ENCODE measurements at regions of chr13 and their contacts with region 1.

Region 1: GRCh38 chr13:24995226-24995804 is 100.6 kb upstream of the PABPC3 start:
- DNase-seq: peak; percentile 76
- ATAC-seq: peak; percentile 83
- H3K4me3 Mint-ChIP-seq: no peak overlapping the region
- H3K27ac Mint-ChIP-seq: no peak overlapping the region
- H3K4me1 Mint-ChIP-seq: peaks cover 3% of the 10 kb centered on the region
- H3K27me3 Mint-ChIP-seq: peaks cover 16% of the 10 kb centered on the region

Region 2: GRCh38 chr13:24747248-24748060 is 247.9 kb before region 1 on chr13:
- CTCF ChIA-PET with region 1: interaction called, 3 read pairs
- POLR2A ChIA-PET with region 1: no interaction called
- intact Hi-C with region 1: loop called in 1 of 2 experiments (anchors 10 kb)
- DNase-seq: peak; percentile 58
- ATAC-seq: peak; percentile 47
- H3K4me3 Mint-ChIP-seq: peak overlapping the region; percentile 57
- H3K27ac Mint-ChIP-seq: no peak overlapping the region
- H3K4me1 Mint-ChIP-seq: peaks cover 9% of the 10 kb centered on the region
- H3K27me3 Mint-ChIP-seq: peaks cover 49% of the 10 kb centered on the region

Region 3: DNA sequence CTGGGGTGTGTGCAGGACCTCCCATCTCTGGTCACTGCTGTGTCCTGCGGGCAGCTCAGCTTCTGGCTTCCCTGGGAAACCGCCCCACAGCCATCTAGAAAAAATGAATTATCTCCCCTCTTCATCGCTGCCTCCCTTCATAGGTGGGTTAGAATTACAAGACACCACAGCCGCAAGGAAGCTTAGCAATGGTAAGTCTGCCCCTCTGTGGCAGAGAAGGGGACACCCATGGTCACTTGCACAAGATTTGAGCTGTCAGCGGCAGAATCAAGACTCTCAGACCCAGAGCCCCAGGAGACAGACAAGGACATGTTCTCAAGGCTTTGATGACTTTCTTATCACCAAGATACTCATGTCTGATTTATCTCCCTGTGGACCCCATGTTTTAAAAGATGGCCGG is 10.2 kb before region 1 on chr13:
- CTCF ChIA-PET with region 1: interaction called, 11 read pairs
- POLR2A ChIA-PET with region 1: interaction called, 3 read pairs
- intact Hi-C with region 1: no loop called
- DNase-seq: no peak
- ATAC-seq: no peak
- H3K4me3 Mint-ChIP-seq: no peak overlapping the region
- H3K27ac Mint-ChIP-seq: no peak overlapping the region
- H3K4me1 Mint-ChIP-seq: no peaks in the 10 kb centered on the region
- H3K27me3 Mint-ChIP-seq: peaks cover 33% of the 10 kb centered on the region

Region 4: GRCh38 chr13:25032160-25032559 is 36.8 kb after region 1 on chr13:
- CTCF ChIA-PET with region 1: interaction called, 13 read pairs
- POLR2A ChIA-PET with region 1: no interaction called
- intact Hi-C with region 1: loop called (anchors 1 to 2 kb)
- DNase-seq: no peak
- ATAC-seq: no peak
- H3K4me3 Mint-ChIP-seq: no peak overlapping the region
- H3K27ac Mint-ChIP-seq: no peak overlapping the region
- H3K4me1 Mint-ChIP-seq: peaks cover 2% of the 10 kb centered on the region
- H3K27me3 Mint-ChIP-seq: peaks cover 27% of the 10 kb centered on the region

Region 5: DNA sequence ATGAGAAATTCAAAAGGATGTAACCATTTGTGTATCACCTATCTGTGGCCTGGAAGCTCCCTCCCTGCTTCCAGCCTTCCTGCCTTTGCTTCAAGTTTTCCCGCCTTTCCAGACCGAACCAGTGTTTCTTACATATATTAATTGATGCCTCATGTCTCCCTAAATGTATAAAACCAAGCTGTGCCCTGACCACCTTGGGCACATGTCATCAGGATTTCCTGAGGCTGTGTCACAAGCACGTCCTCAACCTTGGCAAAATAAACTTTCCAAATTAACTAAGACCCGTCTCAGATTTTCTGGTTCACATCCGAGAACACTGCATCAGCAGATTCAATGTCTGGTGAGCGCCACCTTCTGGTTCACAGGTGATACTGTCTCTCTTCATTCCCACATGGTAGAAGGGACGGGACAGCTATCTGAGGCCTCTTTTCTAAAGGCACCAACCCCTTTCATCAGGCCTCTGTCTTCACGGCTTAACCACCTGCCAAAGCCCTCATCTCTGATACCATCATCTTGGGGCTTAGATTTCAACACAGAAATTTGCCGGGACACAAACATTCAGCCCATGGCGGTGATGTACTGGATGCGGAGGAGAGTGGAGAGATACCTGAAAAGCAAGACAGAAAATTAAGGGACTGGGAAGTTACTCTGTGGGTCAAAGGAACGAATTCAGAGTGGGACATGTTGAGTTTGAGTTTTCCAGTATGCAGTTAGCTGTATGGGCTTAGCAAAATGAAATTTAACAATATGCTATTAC is 41.9 kb after region 1 on chr13:
- CTCF ChIA-PET with region 1: interaction called, 13 read pairs
- POLR2A ChIA-PET with region 1: no interaction called
- intact Hi-C with region 1: loop called (anchors 1 to 2 kb)
- DNase-seq: peak; percentile 69
- ATAC-seq: peak; percentile 60
- H3K4me3 Mint-ChIP-seq: no peak overlapping the region
- H3K27ac Mint-ChIP-seq: no peak overlapping the region
- H3K4me1 Mint-ChIP-seq: peaks cover 2% of the 10 kb centered on the region
- H3K27me3 Mint-ChIP-seq: peaks cover 33% of the 10 kb centered on the region

Region 6: DNA sequence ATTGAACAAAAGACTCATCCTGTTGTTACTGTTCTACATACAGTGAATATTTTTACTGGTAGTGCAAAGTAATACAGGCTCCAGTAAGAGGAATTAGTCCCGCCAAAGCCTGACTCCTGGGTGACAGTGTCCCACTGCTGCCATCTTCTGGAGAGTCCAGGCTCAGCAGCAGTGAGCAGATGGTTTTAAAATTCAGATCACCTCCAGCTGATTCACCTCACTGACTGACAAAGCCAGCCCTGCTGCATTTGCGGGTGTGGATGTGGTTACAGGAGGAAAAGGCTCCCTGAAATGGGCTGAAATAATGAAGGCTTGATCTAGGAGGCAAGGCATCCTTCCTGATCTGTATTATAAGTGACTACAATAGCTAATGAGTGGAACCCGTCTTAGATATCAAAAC is 118.9 kb after region 1 on chr13:
- CTCF ChIA-PET with region 1: interaction called, 17 read pairs
- POLR2A ChIA-PET with region 1: no interaction called
- intact Hi-C with region 1: loop called in 1 of 2 experiments (anchors 2 kb)
- DNase-seq: peak; percentile 79
- ATAC-seq: peak; percentile 81
- H3K4me3 Mint-ChIP-seq: no peak overlapping the region
- H3K27ac Mint-ChIP-seq: no peak overlapping the region
- H3K4me1 Mint-ChIP-seq: no peaks in the 10 kb centered on the region
- H3K27me3 Mint-ChIP-seq: peaks cover 16% of the 10 kb centered on the region

Region 7: GRCh38 chr13:25375727-25376358 is 380.5 kb after region 1 on chr13:
- CTCF ChIA-PET with region 1: no interaction called
- POLR2A ChIA-PET with region 1: no interaction called
- intact Hi-C with region 1: loop called in 1 of 2 experiments (anchors 10 kb)
- DNase-seq: peak; percentile 48
- ATAC-seq: no peak
- H3K4me3 Mint-ChIP-seq: no peak overlapping the region
- H3K27ac Mint-ChIP-seq: no peak overlapping the region
- H3K4me1 Mint-ChIP-seq: peaks cover 6% of the 10 kb centered on the region
- H3K27me3 Mint-ChIP-seq: peaks cover 49% of the 10 kb centered on the region